ENCODE measurements at regions of chr2 and their contacts with region 1.

Region 1: DNA sequence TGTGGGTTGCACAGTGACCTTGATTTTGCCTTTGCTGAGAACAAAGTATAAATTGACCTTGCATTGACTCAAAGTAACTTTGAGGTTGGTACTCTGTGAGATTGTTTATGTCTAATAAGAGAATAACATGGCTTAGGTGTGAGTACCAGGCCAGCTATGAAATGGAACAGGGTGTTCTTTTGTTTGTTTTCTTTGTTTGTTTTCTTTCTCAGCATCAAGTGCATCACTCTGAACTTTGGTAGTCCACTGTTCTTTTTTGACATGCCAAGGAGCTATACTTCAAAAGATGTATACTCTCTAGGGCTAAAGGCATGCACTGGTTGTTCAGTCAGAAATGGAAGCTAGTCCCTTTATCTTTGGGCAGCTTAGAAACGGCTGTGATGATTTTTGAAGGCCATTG is 5.1 kb downstream of the ABCB11 start:
- DNase-seq: no peak
- H3K4me3 ChIP-seq: no peak overlapping the region
- H3K4me3 Mint-ChIP-seq: no peak overlapping the region
- H3K27ac ChIP-seq: no peak overlapping the region
- H3K27ac Mint-ChIP-seq: no peak overlapping the region
- H3K4me1 ChIP-seq: peaks cover 7% of the 10 kb centered on the region
- H3K4me1 Mint-ChIP-seq: peaks cover 10 to 12% (median 11%) of the 10 kb centered on the region in 4 donors
- H3K27me3 ChIP-seq: no peaks in the 10 kb centered on the region
- H3K27me3 Mint-ChIP-seq: no peaks in the 10 kb centered on the region

Region 2: GRCh38 chr2:169038338-169038757 is 12.3 kb after region 1 on chr2:
- CTCF ChIA-PET with region 1: no interaction called
- POLR2A ChIA-PET with region 1: no interaction called
- intact Hi-C with region 1: no loop called
- DNase-seq: no peak
- H3K4me3 ChIP-seq: no peak overlapping the region
- H3K4me3 Mint-ChIP-seq: no peak overlapping the region
- H3K27ac ChIP-seq: no peak overlapping the region
- H3K27ac Mint-ChIP-seq: no peak overlapping the region
- H3K4me1 ChIP-seq: no peaks in the 10 kb centered on the region
- H3K4me1 Mint-ChIP-seq: peaks cover 7 to 21% (median 15%) of the 10 kb centered on the region in 4 donors
- H3K27me3 ChIP-seq: no peaks in the 10 kb centered on the region
- H3K27me3 Mint-ChIP-seq: peaks cover 0 to 2% of the 10 kb centered on the region in 2 donors

Region 3: GRCh38 chr2:169095621-169096105 is 69.6 kb after region 1 on chr2:
- CTCF ChIA-PET with region 1: no interaction called
- POLR2A ChIA-PET with region 1: no interaction called
- intact Hi-C with region 1: loop called (anchors 10 kb)
- DNase-seq: no peak
- H3K4me3 ChIP-seq: no peak overlapping the region
- H3K4me3 Mint-ChIP-seq: peak overlapping the region in 3 of 8 donors; percentile 15 to 49 (median 43)
- H3K27ac ChIP-seq: no peak overlapping the region
- H3K27ac Mint-ChIP-seq: peak overlapping the region in 1 of 7 donors; percentile 9
- H3K4me1 ChIP-seq: peaks cover 10% of the 10 kb centered on the region
- H3K4me1 Mint-ChIP-seq: peaks cover 7 to 16% (median 15%) of the 10 kb centered on the region in 4 donors
- H3K27me3 ChIP-seq: no peaks in the 10 kb centered on the region
- H3K27me3 Mint-ChIP-seq: peaks cover 4 to 5% of the 10 kb centered on the region in 2 donors

Region 4: GRCh38 chr2:169159686-169160085 is 133.6 kb after region 1 on chr2:
- CTCF ChIA-PET with region 1: no interaction called
- POLR2A ChIA-PET with region 1: no interaction called
- intact Hi-C with region 1: no loop called
- DNase-seq: no peak
- H3K4me3 ChIP-seq: no peak overlapping the region
- H3K4me3 Mint-ChIP-seq: no peak overlapping the region
- H3K27ac ChIP-seq: no peak overlapping the region
- H3K27ac Mint-ChIP-seq: no peak overlapping the region
- H3K4me1 ChIP-seq: no peaks in the 10 kb centered on the region
- H3K4me1 Mint-ChIP-seq: no peaks in the 10 kb centered on the region
- H3K27me3 ChIP-seq: no peaks in the 10 kb centered on the region
- H3K27me3 Mint-ChIP-seq: peaks cover 7 to 8% of the 10 kb centered on the region in 2 donors

Region 5: DNA sequence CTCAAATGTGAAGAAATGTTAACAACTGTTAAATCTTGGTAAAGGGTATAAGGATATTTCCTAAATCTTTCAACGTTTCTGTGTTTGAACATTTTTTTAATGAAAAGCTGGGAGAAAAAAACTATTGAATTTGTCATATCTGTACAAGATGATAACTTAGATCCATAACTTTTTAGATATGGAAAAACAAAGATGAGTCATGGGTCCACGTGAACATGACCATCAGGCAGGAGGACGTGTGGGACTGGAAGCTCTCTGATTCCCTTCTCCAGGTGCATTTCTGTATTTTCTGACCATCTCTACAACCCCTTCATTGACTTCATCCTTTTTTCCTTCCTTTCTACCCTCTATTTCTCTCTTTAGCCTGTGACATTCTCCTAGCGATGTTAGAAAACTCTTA is 184.9 kb after region 1 on chr2:
- CTCF ChIA-PET with region 1: no interaction called
- POLR2A ChIA-PET with region 1: no interaction called
- intact Hi-C with region 1: no loop called
- DNase-seq: no peak
- H3K4me3 ChIP-seq: no peak overlapping the region
- H3K4me3 Mint-ChIP-seq: no peak overlapping the region
- H3K27ac ChIP-seq: no peak overlapping the region
- H3K27ac Mint-ChIP-seq: no peak overlapping the region
- H3K4me1 ChIP-seq: no peaks in the 10 kb centered on the region
- H3K4me1 Mint-ChIP-seq: no peaks in the 10 kb centered on the region
- H3K27me3 ChIP-seq: no peaks in the 10 kb centered on the region
- H3K27me3 Mint-ChIP-seq: peaks cover 2 to 3% of the 10 kb centered on the region in 2 donors

Measured in CD4-positive, alpha-beta memory T cell (primary cell).